AG04450 (cell line): ENCODE measurements at regions of chr10 and their contacts with region 1.

Region 1: DNA sequence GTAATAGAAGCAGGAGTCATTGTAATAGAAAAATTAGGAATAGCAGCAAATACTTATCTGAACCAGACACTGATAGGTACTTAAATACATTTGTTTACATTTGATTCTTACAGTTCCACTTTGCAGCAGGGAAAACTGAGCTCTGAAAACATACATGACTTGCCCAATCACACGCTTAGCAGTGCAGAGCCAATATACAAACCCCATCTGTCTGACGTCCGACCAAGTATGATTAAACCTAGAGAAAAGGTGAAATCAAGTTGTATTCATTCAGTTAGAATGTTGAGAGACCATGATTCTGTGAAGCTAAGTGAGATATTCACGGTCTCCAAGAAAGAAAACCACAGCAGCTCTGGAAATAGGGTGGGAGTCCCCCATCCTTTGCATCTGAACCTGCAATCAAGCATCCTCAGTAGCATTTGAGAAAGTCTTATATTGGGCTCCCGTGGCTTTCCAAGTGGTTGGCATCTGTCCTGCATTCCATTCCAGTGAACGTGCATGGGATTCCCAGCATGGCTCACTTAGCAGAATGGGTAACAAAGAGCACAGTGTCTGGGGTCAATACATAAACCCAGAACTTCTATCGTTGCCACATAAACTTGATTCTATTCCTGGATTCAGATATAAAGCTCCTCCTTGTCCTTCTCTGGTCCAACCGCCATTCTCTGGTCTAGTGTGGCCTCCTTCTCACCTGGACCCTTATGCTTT is 148.7 kb upstream of the RSU1 start:
- DNase-seq: peak; percentile 97
- H3K4me3 ChIP-seq: no peak overlapping the region
- H3K27ac ChIP-seq: peak overlapping the region; percentile 96
- H3K27me3 ChIP-seq: no peaks in the 10 kb centered on the region
- CTCF ChIP-seq: no peak

Region 2: GRCh38 chr10:16817125-16818019 is 148.5 kb before region 1 on chr10 and contains the start of gene RSU1:
- CTCF ChIA-PET with region 1: no interaction called
- POLR2A ChIA-PET with region 1: no interaction called
- DNase-seq: peak; percentile 99
- H3K4me3 ChIP-seq: peak within 1 kb of the TSS; percentile 90
- H3K27ac ChIP-seq: peak within 1 kb of the TSS; percentile 93
- H3K27me3 ChIP-seq: no peaks in the 10 kb centered on the region
- CTCF ChIP-seq: no peak
- polyA plus RNA-seq, gene RSU1: 217 and 229 TPM in 2 replicates

Region 3: GRCh38 chr10:16986406-16987205 is 20.7 kb after region 1 on chr10:
- CTCF ChIA-PET with region 1: interaction called, 4 read pairs
- POLR2A ChIA-PET with region 1: interaction called, 19 read pairs
- DNase-seq: peak; percentile 67
- H3K4me3 ChIP-seq: no peak overlapping the region; the same call in 1 of the 2 replicates
- H3K27ac ChIP-seq: peak overlapping the region; percentile 96
- H3K27me3 ChIP-seq: no peaks in the 10 kb centered on the region
- CTCF ChIP-seq: no peak